Activated naive CD4-positive, alpha-beta T cell treated with anti-CD3 and anti-CD28 coated beads, Interleukin-2, amount 10 ng/mL, durations not matched to agents 7 days and 5 days (primary cell): ENCODE measurements at regions of chr21 and their contacts with region 1.

Region 1: GRCh38 chr21:33199516-33200217 is 30.1 kb upstream of the IFNAR2 start:
- DNase-seq: peak; percentile 88
- H3K4me3 Mint-ChIP-seq: no peak overlapping the region
- H3K27ac Mint-ChIP-seq: no peak overlapping the region
- H3K4me1 Mint-ChIP-seq: peaks cover 27% of the 10 kb centered on the region
- H3K27me3 Mint-ChIP-seq: peaks cover 23% of the 10 kb centered on the region

Region 2: GRCh38 chr21:32940079-32941014 is 259.3 kb before region 1 on chr21:
- CTCF ChIA-PET with region 1: interaction called, 21 read pairs
- DNase-seq: peak; percentile 54
- H3K4me3 Mint-ChIP-seq: no peak overlapping the region
- H3K27ac Mint-ChIP-seq: no peak overlapping the region
- H3K4me1 Mint-ChIP-seq: peaks cover 4% of the 10 kb centered on the region
- H3K27me3 Mint-ChIP-seq: peaks cover 17% of the 10 kb centered on the region

Region 3: DNA sequence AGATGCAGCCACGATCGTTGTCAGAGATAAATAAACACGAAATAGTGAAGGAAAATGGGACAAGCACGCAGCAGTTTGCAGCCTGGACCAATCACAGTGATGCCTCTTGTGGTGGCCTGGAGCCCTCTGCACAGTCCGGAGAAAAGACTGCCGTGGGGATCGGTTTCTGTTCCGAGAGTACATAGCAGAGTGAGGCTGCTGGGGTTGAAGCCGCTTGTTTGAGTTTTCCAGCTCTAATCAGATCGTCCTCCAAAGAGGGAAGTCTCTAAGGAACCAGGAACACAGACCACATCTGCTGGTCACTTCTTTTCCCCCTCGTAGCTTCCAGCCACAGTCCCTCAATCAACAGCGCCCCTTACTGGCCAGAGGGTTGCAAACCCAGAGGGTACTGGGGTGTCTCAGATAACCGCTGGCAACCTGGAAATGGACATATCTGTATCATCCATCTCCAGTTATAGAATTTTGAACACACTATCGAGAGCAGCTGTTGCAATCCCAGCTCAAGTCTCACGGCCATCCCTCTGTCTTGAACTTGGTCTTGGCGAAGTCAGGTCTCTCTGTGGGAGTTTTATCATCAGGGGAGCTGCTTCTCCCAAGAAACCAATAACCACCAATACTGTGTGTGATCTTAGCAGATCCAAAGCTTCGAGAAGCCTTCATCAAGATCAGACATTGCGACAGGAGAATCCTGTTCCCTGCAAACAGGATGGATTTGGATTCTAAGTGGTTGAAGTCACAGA is 72.3 kb before region 1 on chr21:
- CTCF ChIA-PET with region 1: interaction called, 44 read pairs
- DNase-seq: peak; percentile 76
- H3K4me3 Mint-ChIP-seq: peak overlapping the region; percentile 42
- H3K27ac Mint-ChIP-seq: no peak overlapping the region
- H3K4me1 Mint-ChIP-seq: peaks cover 5% of the 10 kb centered on the region
- H3K27me3 Mint-ChIP-seq: peaks cover 30% of the 10 kb centered on the region

Region 4: GRCh38 chr21:33360881-33361602 is 161.4 kb after region 1 on chr21:
- CTCF ChIA-PET with region 1: interaction called, 16 read pairs
- DNase-seq: peak; percentile 91
- H3K4me3 Mint-ChIP-seq: peak overlapping the region; percentile 71
- H3K27ac Mint-ChIP-seq: peak overlapping the region; percentile 93
- H3K4me1 Mint-ChIP-seq: peaks cover 26% of the 10 kb centered on the region
- H3K27me3 Mint-ChIP-seq: no peaks in the 10 kb centered on the region

Region 5: GRCh38 chr21:33444499-33444898 is 244.8 kb after region 1 on chr21:
- CTCF ChIA-PET with region 1: interaction called, 35 read pairs
- DNase-seq: no peak
- H3K4me3 Mint-ChIP-seq: no peak overlapping the region
- H3K27ac Mint-ChIP-seq: no peak overlapping the region
- H3K4me1 Mint-ChIP-seq: peaks cover 8% of the 10 kb centered on the region
- H3K27me3 Mint-ChIP-seq: no peaks in the 10 kb centered on the region